ENCODE measurements at regions of chr12 and their contacts with region 1.

Region 1: DNA sequence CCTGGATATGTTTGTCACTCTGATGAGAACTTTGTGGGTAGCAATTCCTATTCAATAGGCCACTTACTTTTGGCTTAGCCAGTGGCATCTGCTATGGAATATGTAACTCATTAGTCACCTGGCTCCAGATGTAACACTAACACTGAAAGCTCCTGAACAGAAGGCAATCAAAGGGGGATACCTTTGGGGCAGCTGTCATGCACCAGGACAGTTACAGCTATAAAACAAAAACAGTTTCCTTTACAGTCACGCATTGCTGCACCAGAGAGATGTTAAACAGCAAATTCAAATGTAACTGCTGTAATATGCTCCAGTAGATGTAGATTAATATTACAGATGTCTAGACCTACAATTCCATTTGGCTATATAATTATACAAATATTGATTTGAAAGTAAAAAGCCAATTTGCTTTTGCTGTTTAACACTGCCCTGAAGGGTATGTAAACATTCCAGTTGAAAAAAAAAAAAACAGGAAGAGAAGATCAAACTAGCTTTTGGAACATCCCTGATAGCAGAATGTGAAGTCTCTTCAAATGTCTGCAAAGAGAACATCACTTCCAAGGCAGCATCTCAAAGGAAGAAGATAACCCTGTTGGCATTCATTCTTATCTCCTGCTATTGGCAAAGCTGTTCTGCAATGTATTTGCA is 18.4 kb downstream of the RACGAP1 start:
- DNase-seq: no peak
- ATAC-seq: no peak
- H3K4me3 ChIP-seq: no peak overlapping the region
- H3K27ac ChIP-seq: no peak overlapping the region
- H3K4me1 ChIP-seq: no peaks in the 10 kb centered on the region
- H3K27me3 ChIP-seq: no peaks in the 10 kb centered on the region
- CTCF ChIP-seq: no peak

Region 2: DNA sequence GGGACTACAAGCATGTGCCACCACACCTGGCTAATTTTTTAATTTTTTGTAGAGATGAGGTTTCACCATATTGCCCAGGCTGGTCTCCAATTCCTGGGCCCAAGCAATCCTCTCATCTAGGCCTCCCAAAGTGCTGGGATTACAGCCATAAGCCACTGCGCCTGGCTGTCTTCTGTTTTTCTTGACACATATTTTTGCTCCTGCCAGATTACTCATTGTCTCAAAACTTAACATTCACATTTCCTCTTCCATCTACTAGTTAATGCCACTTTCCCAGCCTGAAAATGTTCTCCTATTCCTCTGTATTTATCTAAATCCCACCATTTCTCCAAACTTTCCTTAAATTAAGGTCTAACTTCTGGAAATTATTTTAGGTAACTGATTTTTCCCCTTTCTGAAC is 504.3 kb before region 1 on chr12:
- intact Hi-C with region 1: no loop called
- DNase-seq: no peak
- ATAC-seq: no peak
- H3K4me3 ChIP-seq: no peak overlapping the region
- H3K27ac ChIP-seq: no peak overlapping the region
- H3K4me1 ChIP-seq: peaks cover 3% of the 10 kb centered on the region
- H3K27me3 ChIP-seq: no peaks in the 10 kb centered on the region
- CTCF ChIP-seq: no peak

Region 3: GRCh38 chr12:49847161-49847560 is 159.8 kb before region 1 on chr12:
- intact Hi-C with region 1: no loop called
- DNase-seq: no peak
- ATAC-seq: no peak
- H3K4me3 ChIP-seq: no peak overlapping the region
- H3K27ac ChIP-seq: no peak overlapping the region
- H3K4me1 ChIP-seq: peaks cover 5% of the 10 kb centered on the region
- H3K27me3 ChIP-seq: peaks cover 0 to 32% (median 3%) of the 10 kb centered on the region in 3 donors
- CTCF ChIP-seq: no peak

Region 4: DNA sequence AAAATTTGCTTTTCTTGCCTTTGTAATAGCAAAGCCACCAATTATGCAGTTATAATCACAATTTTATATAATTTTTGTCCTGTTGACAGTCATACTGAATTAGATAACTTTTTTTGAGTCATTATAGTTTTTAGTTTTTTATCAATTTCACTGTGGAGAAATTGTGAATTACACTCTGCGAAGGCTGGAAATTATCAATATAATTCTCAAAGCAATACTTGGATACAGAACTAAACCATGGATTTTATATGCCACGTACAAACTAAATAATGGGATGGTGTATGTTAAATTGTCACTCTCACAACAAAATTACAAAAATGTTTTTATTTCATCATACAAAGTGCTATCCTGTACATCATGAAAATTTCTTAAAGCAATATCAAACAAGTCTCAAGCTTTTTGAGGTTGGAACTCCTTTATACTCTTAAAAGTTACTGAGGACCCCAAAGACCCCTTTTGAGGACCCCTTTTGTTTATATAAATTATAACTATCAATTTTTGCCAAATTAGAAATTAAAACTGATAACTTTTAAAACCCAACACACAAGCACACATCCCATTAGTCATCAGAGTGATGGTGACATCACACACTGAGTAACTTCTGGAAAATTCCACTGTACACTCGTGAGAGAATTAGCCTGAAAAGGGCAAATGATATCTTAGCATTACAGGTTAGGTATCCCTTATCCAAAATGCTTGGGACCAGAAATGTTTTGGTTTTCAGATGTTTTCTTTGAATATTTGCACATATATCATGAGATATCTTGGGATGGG is 76.2 kb before region 1 on chr12:
- intact Hi-C with region 1: no loop called
- DNase-seq: no peak
- ATAC-seq: no peak
- H3K4me3 ChIP-seq: no peak overlapping the region
- H3K27ac ChIP-seq: no peak overlapping the region
- H3K4me1 ChIP-seq: no peaks in the 10 kb centered on the region
- H3K27me3 ChIP-seq: no peaks in the 10 kb centered on the region
- CTCF ChIP-seq: no peak

Region 5: DNA sequence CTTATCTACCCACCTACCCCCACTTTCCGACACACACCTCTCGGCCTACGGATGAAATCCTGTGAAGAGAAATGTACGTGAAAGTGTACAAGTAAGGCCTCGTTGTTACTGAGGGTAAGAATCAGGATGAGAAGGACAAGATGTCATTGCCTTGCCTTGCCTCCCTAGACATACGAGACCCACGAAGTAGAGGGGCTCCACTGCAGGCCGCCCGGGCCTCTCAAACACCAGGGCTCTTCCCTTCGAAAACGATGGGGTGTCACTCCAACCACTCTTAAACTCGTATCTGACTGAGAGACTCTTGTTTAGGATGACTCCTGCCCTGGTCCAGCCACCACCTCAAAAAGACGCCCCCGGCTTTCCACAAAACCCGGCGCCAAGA is 17.9 kb after region 1 on chr12:
- intact Hi-C with region 1: loop called in 1 of 2 experiments (anchors 1 kb)
- DNase-seq: no peak
- ATAC-seq: peak; percentile 2 to 22 (median 10)
- H3K4me3 ChIP-seq: peak overlapping the region; percentile 76
- H3K27ac ChIP-seq: peak overlapping the region; percentile 32
- H3K4me1 ChIP-seq: no peaks in the 10 kb centered on the region
- H3K27me3 ChIP-seq: no peaks in the 10 kb centered on the region
- CTCF ChIP-seq: no peak